ENCODE measurements at regions of chr16 and their contacts with region 1.

Region 1: DNA sequence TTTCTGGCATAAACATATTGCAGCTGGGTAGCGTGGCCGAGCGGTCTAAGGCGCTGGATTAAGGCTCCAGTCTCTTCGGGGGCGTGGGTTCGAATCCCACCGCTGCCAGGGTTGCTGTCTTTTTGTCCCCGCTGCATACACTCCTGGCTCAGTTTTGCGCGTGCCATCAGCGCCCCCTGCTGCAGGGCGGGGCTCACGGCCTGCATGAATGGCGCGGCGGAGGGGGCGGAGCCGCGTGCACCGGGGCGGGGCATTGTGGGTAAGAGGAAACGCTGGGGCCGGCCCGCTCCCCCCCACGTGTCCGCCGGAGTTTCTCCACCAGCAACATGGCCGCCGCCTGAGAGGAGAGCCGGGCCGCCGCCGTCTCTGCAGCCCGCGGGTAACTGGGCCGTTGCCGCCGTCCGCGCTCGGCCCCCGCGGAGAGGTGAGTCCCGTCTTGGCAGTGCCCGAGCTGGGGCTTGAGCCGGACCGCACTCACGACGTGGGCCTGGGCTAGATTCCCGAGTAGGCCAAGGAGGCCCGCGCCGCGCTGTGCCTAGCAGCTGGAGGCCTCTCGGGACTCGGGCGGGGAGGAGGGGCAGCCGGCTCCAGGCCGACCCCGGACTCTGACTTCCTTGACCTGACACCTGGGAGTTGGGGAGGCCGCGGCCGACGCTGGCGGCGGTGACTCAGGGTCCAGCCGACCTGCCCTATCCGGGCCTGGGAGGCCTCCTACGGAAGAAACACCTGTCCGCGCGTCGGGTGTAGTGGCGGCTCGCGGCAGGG is at the start of gene POLR3E:
- DNase-seq: peak; percentile 99
- H3K4me3 ChIP-seq: peak within 1 kb of the TSS; percentile 78 to 91
- H3K27ac ChIP-seq: peak within 1 kb of the TSS; percentile 92 to 96
- H3K4me1 ChIP-seq: peaks cover 5% of the 10 kb centered on the region
- H3K27me3 ChIP-seq: no peaks in the 10 kb centered on the region
- CTCF ChIP-seq: peak; percentile 95 to 100 (median 99)
- POLR2A ChIP-seq: peak; percentile 73
- total RNA-seq, gene POLR3E: 52.3 to 61.7 TPM

Region 2: GRCh38 chr16:22007509-22008214 is 289.6 kb before region 1 on chr16 and contains the start of gene MOSMO:
- intact Hi-C with region 1: loop called (anchors 5 kb)
- DNase-seq: peak; percentile 65
- H3K4me3 ChIP-seq: peak within 1 kb of the TSS; percentile 68 to 82
- H3K27ac ChIP-seq: peak within 1 kb of the TSS; percentile 82 to 84
- H3K4me1 ChIP-seq: peaks cover 6% of the 10 kb centered on the region
- H3K27me3 ChIP-seq: no peaks in the 10 kb centered on the region
- CTCF ChIP-seq: peak in 1 of 4 experiments; percentile 24
- POLR2A ChIP-seq: no peak
- total RNA-seq, gene MOSMO: 19.6 to 21.0 TPM